ENCODE measurements at regions of chr10 and their contacts with region 1.

Region 1: DNA sequence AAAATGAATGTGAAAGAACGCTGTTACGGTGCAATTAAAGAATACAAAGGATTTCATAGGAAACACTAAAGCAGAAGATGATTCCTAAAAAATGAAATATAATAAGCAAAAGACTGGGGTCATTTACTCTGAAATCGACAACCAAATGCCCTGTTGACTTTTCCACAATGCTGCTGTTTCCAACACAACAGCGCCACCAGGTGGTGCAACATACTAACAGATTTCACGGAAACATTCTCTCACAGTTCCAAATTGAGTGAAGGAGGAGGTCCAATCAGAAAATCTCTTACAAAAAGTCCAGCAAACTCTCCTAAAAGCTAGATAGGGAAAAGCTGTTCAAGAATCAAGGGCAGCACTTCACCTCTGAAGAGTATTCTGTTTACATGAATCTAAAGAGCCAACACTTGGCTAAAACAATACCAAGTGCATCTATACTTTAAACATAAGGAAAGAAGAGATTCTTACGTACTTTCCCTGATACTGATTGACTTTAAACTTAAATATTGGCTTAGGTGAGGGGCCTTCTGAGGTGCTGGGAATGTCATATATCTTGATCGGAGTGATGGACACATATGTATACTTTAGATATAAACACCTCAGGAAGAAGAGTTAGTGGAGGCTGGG is 55.9 kb downstream of the UPF2 start:
- DNase-seq: peak in 2 of 3 donors; percentile 81 to 93
- ATAC-seq: peak; percentile 94
- H3K4me3 ChIP-seq: no peak overlapping the region
- H3K4me1 ChIP-seq: peaks cover 14% of the 10 kb centered on the region
- CTCF ChIP-seq: peak; percentile 61

Region 2: GRCh38 chr10:11729726-11730315 is 256.9 kb before region 1 on chr10:
- intact Hi-C with region 1: no loop called
- DNase-seq: no peak
- ATAC-seq: no peak
- H3K4me3 ChIP-seq: no peak overlapping the region
- H3K4me1 ChIP-seq: no peaks in the 10 kb centered on the region
- CTCF ChIP-seq: no peak

Region 3: GRCh38 chr10:11789306-11789705 is 197.4 kb before region 1 on chr10:
- intact Hi-C with region 1: loop called in 1 of 2 experiments (anchors 5 kb)
- DNase-seq: no peak
- ATAC-seq: no peak
- H3K4me3 ChIP-seq: no peak overlapping the region
- H3K4me1 ChIP-seq: no peaks in the 10 kb centered on the region
- CTCF ChIP-seq: no peak

Measured in mucosa of descending colon (tissue), 3 donors.